ENCODE measurements at regions of chr12 and their contacts with region 1.

Region 1: DNA sequence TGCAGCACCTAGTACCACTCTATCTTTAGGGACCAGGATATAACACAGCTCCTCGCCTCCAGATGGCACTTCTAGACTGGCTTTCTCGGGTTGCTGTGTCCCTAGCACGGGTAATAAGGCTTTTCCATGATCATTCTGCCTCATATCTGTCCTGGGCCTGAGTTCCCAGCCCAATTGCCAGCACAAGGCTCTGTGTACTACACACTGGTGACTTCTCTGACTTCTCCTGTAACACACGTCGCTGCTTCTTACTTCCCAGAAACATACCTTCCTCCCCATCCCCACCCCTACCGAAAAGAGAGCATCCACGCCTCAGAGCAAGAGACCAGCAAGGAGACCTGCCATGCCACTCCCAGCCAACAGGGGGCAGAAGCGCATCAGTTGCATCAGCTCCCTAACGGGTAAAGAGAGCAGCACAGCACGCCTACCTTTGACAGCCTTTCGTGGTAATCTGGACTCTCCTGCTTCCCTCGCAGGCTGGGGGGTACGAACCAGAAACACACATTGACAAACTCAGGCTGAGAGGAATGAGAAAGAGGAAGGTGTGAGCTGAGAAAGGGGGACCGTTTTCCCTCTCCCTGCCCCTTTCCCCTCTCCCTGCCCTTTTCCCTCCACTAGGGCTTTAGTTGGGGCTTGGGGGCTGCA is 21.2 kb upstream of the ZNF740 start:
- DNase-seq: peak; percentile 66
- H3K4me3 ChIP-seq: no peak overlapping the region
- H3K27ac ChIP-seq: no peak overlapping the region
- H3K4me1 ChIP-seq: no peaks in the 10 kb centered on the region
- H3K27me3 ChIP-seq: no peaks in the 10 kb centered on the region
- CTCF ChIP-seq: peak; percentile 98 to 99
- POLR2A ChIP-seq: no peak

Region 2: GRCh38 chr12:53079226-53080117 is 79.8 kb before region 1 on chr12 and contains the start of gene SPRYD3:
- CTCF ChIA-PET with region 1: interaction called, 12 read pairs
- POLR2A ChIA-PET with region 1: no interaction called
- dilution Hi-C with region 1: no loop called
- intact Hi-C with region 1: no loop called
- DNase-seq: peak; percentile 98
- H3K4me3 ChIP-seq: peak within 1 kb of the TSS; percentile 68 to 87 (median 80)
- H3K27ac ChIP-seq: peak within 1 kb of the TSS; percentile 52
- H3K4me1 ChIP-seq: peaks cover 9% of the 10 kb centered on the region
- H3K27me3 ChIP-seq: no peaks in the 10 kb centered on the region
- CTCF ChIP-seq: no peak
- POLR2A ChIP-seq: peak; percentile 98
- total RNA-seq, gene SPRYD3: 31.7 and 39.2 TPM in 2 replicates

Region 3: DNA sequence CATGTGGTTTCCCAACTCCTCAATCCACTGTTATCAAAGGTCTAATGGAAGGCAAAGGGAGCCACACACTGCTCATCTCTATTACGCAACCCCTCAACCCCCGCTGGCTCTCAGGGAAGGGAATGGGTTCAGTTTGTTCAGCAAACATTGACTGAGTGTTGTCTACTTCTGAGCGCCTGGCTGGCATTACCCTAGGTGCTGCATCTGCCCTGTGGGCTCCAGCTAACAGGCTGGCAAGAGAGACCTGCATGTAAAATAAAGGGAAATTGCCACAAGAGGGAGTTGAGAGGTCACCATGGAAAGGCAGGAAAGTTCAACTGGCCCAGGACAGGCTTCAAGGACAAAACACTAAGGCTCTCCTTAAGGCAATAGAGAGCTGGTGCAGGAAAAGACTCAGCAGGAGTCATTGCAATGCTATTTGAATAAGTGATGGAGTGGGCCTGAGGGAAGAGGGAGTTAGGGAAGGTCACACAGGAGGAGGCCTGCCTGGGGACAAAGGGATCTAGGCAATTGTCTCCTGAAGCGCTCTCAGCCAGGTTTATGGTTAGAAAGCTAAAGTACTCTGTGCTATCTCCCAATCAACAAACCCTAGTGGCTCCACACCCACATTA is 15.7 kb after region 1 on chr12:
- CTCF ChIA-PET with region 1: interaction called, 36 read pairs
- POLR2A ChIA-PET with region 1: no interaction called
- dilution Hi-C with region 1: no loop called
- intact Hi-C with region 1: loop called (anchors 2 kb)
- DNase-seq: peak; percentile 28
- H3K4me3 ChIP-seq: no peak overlapping the region
- H3K27ac ChIP-seq: no peak overlapping the region
- H3K4me1 ChIP-seq: peaks cover 5% of the 10 kb centered on the region
- H3K27me3 ChIP-seq: no peaks in the 10 kb centered on the region
- CTCF ChIP-seq: peak; percentile 7 to 25
- POLR2A ChIP-seq: no peak

Region 4: DNA sequence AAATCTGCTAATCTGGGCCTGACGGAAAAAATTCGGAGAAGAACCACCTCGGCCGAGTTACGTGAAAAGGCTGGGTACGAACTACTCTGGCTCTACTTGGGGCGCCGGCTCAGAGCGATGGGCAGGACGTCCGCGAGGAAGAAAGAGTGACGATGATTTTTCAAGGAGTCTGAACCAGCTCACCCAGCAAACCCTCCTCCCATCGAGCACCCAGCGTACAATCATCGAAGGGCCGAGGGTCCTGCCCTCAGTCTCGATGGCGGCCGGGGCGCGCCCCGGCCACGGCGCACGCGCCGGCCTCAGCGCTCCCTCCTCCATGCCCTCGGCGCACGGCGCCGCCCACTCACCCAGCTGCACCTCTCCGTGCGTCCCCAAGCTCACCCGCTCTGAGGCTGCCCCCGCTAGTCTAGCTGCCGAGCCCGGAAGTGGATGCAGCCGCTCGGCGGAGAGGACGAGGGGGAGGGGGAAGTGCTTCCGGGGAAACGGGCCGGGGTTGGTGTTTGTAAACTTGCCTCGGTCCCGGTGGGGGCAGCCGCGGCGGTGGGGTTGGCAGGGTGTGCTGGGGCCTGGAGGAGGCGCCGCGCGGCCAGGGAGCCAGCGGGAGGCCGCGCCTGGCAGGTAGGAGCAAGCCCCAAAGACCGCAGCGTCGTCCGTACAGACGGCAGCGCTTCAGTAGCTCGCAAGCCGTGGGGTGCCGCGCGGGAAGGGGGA is 21.1 kb after region 1 on chr12 and contains the starts of genes CSAD and ZNF740:
- CTCF ChIA-PET with region 1: interaction called, 36 read pairs
- POLR2A ChIA-PET with region 1: no interaction called
- dilution Hi-C with region 1: no loop called
- intact Hi-C with region 1: loop called (anchors 2 kb)
- DNase-seq: peak; percentile 96
- H3K4me3 ChIP-seq: peak within 1 kb of the TSS; percentile 60 to 91 (median 73)
- H3K27ac ChIP-seq: peak within 1 kb of the TSS; percentile 50
- H3K4me1 ChIP-seq: peaks cover 22% of the 10 kb centered on the region
- H3K27me3 ChIP-seq: no peaks in the 10 kb centered on the region
- CTCF ChIP-seq: no peak
- POLR2A ChIP-seq: peak; percentile 87
- total RNA-seq, gene CSAD: 21.1 and 22.0 TPM in 2 replicates
- total RNA-seq, gene ZNF740: 34.9 and 38.1 TPM in 2 replicates

Region 5: DNA sequence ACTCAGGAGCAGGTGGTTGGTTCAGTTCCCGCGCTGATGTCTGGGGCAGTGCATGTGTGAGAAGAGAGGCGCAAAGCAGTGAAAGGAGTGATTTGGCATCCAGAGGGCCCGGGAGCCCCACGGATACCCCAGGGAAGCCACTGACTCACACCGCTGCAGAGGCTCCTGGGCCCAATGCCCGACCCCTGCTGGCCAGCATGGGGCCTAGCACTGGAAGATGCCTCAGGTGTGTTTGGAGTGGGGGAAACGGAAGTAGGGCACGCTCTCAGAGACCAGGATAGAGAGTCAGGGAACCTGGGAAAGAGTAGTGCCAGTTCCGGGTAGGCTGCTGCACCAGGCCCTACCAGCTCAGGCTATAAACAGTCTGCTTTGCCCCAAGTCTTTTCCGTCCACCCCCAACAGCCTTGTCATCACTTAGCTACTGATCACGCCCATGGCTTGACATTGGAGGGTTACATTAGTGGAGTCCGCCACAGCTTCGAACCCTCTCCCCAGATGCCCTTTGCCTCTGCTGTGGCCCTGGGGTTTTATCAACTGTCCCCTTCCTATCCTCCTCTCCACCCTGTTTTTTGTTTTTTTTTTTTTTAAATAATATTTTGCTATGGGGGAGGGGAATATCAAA is 30.9 kb after region 1 on chr12:
- CTCF ChIA-PET with region 1: interaction called, 249 read pairs
- POLR2A ChIA-PET with region 1: interaction called, 3 read pairs
- dilution Hi-C with region 1: no loop called
- intact Hi-C with region 1: loop called (anchors 1 kb)
- DNase-seq: peak; percentile 49
- H3K4me3 ChIP-seq: no peak overlapping the region
- H3K27ac ChIP-seq: no peak overlapping the region
- H3K4me1 ChIP-seq: peaks cover 4% of the 10 kb centered on the region
- H3K27me3 ChIP-seq: no peaks in the 10 kb centered on the region
- CTCF ChIP-seq: peak; percentile 73 to 86
- POLR2A ChIP-seq: no peak